Activated T-helper 2 cell treated with anti-CD3 and anti-CD28 coated beads, Interferon-gamma antibody, Interleukin-2, Interleukin-4, amounts not matched to agents 10 μg/mL and 5 μg/mL and 100 μg/mL, durations not matched to agents 14 hours and 24 hours and 36 hours (primary cell): ENCODE measurements at regions of chr4 and their contacts with region 1.

Region 1: DNA sequence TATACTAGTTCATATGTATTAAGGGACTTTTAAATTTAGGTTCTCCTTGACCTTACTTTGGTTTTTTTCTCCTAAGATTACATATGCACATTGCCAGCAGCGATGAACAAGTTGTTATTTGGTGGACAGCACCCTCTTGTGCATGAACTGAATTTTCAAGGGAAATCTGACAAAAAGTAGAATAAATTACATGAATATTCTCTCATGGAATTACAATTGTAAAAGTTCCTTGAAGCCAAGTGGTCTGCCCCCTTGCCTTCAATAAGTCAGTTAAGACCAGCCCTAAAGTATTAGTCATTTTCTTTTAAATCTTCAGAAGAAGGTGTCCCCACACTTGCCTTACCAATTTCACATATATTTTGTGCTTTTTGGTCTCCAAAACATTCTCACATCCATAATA is 30.7 kb upstream of the SMARCA5 start:
- DNase-seq: no peak
- H3K4me3 Mint-ChIP-seq: no peak overlapping the region
- H3K27ac Mint-ChIP-seq: no peak overlapping the region
- H3K4me1 Mint-ChIP-seq: no peaks in the 10 kb centered on the region
- H3K27me3 Mint-ChIP-seq: peaks cover 9% of the 10 kb centered on the region

Region 2: DNA sequence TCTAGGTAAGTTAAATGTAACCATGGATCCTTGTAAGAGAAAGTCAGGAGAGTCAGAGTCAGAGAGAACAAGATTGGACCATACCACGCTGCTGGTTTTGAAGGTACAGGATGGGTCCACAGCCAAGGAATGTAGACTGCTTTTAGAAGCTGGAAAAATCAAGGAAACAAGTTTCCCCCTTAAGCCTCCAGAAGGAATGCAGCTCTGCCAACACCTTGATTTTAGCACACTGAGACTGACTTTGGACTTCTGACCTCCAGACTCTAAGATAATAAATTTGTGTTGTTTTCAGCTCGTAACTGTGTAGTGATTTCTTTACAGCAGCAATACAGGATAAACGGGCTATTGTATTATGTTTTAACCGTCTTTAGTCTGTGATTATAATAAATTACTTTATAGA is 406.1 kb before region 1 on chr4:
- intact Hi-C with region 1: no loop called
- DNase-seq: no peak
- H3K4me3 Mint-ChIP-seq: no peak overlapping the region
- H3K27ac Mint-ChIP-seq: no peak overlapping the region
- H3K4me1 Mint-ChIP-seq: no peaks in the 10 kb centered on the region
- H3K27me3 Mint-ChIP-seq: peaks cover 4% of the 10 kb centered on the region

Region 3: GRCh38 chr4:143302536-143302935 is 180.3 kb before region 1 on chr4:
- intact Hi-C with region 1: no loop called
- DNase-seq: no peak
- H3K4me3 Mint-ChIP-seq: no peak overlapping the region
- H3K27ac Mint-ChIP-seq: no peak overlapping the region
- H3K4me1 Mint-ChIP-seq: no peaks in the 10 kb centered on the region
- H3K27me3 Mint-ChIP-seq: no peaks in the 10 kb centered on the region

Region 4: DNA sequence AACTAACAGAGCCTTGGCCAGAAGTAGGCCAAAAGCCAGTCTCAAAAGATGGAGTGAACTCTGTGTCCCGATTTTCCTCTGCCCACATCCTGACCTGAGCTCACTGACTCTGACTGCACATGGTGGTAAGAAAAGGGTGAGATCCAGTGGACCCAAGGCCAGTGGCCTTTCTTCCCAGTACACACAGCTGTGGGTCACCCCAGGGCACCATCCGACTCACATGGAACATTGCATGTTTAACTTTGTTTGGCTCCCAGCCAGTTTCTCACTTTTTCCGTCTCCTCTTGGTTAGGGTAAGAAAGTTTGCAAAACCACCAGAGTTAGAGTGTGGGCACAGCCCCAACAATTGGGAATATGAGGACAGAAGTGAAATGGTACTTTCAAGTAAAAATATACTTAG is 76.3 kb before region 1 on chr4:
- intact Hi-C with region 1: loop called (anchors 5 kb)
- DNase-seq: no peak
- H3K4me3 Mint-ChIP-seq: no peak overlapping the region
- H3K27ac Mint-ChIP-seq: no peak overlapping the region
- H3K4me1 Mint-ChIP-seq: peaks cover 19% of the 10 kb centered on the region
- H3K27me3 Mint-ChIP-seq: peaks cover 14% of the 10 kb centered on the region